Naive thymus-derived CD4-positive, alpha-beta T cell (primary cell): ENCODE measurements at regions of chr20 and their contacts with region 1.

Region 1: DNA sequence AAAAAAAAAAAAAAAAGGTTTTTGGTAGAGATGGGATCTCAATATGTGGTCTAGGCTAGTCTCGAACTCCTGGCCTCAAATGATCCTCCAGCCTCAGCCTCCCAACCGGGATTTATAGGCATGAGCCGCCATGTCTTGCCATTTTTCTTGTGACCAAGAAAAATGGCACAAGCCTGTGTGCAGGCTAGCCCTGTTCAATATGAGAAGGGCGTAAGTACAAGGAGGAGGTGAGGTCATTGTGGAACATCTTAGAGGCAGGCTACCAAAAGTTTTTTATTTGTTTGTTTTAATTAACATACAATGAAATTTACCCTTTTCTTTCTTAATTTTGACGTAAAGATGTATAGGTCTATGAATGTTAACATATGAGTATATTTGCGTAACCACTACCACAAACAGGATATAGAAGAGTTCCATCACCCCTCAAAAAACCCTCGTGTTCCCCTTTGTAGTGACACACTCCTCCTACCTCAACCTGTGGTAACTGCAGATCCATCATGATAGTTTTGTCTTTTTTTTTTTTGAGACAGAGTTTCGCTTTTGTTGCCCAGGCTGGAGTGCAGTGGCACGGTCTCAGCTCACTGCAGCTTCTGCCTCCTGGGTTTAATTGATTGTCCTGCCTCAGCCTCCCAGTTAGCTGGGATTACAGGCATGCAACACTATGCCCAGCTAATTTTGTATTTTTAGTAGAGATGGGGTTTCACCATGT is 28.3 kb upstream of the KIF3B start:
- DNase-seq: peak in 8 of 9 donors; percentile 43 to 87 (median 78)
- ATAC-seq: peak; percentile 98
- H3K4me3 ChIP-seq: no peak overlapping the region
- H3K4me3 Mint-ChIP-seq: peak overlapping the region in 9 of 10 donors; percentile 18 to 68 (median 33)
- H3K27ac ChIP-seq: peak overlapping the region; percentile 38
- H3K27ac Mint-ChIP-seq: peak overlapping the region; percentile 39 to 92 (median 84)
- H3K4me1 ChIP-seq: no peaks in the 10 kb centered on the region
- H3K4me1 Mint-ChIP-seq: peaks cover 2 to 35% (median 28%) of the 10 kb centered on the region in 7 donors
- H3K27me3 ChIP-seq: no peaks in the 10 kb centered on the region
- H3K27me3 Mint-ChIP-seq: no peaks in the 10 kb centered on the region

Region 2: GRCh38 chr20:32231847-32232246 is 17.3 kb before region 1 on chr20:
- CTCF ChIA-PET with region 1: interaction called, 3 read pairs
- POLR2A ChIA-PET with region 1: no interaction called
- intact Hi-C with region 1: loop called in 1 of 2 experiments (anchors 2 kb)
- DNase-seq: peak in 7 of 9 donors; percentile 11 to 46 (median 42)
- ATAC-seq: peak; percentile 85
- H3K4me3 ChIP-seq: no peak overlapping the region
- H3K4me3 Mint-ChIP-seq: peak overlapping the region in 5 of 10 donors; percentile 1 to 56 (median 48)
- H3K27ac ChIP-seq: peak overlapping the region; percentile 25
- H3K27ac Mint-ChIP-seq: peak overlapping the region; percentile 30 to 95 (median 90)
- H3K4me1 ChIP-seq: peaks cover 10 to 12% of the 10 kb centered on the region in 2 donors
- H3K4me1 Mint-ChIP-seq: peaks cover 14 to 30% (median 21%) of the 10 kb centered on the region in 7 donors
- H3K27me3 ChIP-seq: no peaks in the 10 kb centered on the region
- H3K27me3 Mint-ChIP-seq: no peaks in the 10 kb centered on the region